Breast epithelium (tissue), 4 donors: ENCODE measurements at regions of chr12 and their contacts with region 1.

Region 1: GRCh38 chr12:22974865-22975264 is 349.9 kb downstream of the ETNK1 start:
- DNase-seq: no peak
- H3K4me3 ChIP-seq: no peak overlapping the region
- H3K27ac ChIP-seq: no peak overlapping the region
- H3K4me1 ChIP-seq: no peaks in the 10 kb centered on the region
- H3K27me3 ChIP-seq: no peaks in the 10 kb centered on the region
- CTCF ChIP-seq: no peak
- POLR2A ChIP-seq: no peak

Region 2: DNA sequence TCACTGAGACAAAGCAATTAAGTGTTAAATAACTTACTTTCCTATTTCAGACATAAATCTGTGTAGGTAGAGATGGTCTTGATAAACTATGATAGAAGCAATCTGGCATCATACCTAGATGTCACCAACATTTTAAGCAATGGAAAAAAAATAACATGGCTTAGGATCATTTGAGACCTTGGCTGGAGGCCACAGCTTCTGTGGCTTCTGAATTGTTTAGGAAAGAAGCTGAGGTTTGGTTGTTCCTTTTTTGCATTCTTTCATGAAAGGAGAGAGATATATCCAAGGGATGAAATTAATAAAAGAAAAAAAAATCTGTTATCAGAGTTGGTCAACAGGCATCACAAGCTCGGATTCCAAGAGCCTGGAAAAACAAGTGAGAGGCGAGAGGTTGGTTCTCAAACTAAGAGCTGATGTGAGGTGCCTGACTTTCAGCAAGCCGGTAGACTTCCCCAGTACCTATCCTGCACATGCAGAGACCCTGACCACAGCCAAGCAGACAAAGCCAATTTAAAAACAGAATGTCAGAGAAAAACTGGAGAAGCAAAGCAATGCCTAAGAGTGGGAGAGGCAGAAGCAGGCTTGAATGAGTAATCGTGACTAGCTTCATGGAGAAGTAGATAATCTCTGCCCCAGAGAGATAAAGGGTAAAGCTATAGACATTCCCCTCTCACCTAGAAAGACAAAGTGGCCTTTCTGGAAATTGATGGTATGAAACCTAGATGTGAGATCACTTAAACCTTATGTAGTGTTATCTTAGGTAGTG is 597.0 kb before region 1 on chr12:
- intact Hi-C with region 1: loop called (anchors 10 kb)
- DNase-seq: no peak
- H3K4me3 ChIP-seq: no peak overlapping the region
- H3K27ac ChIP-seq: no peak overlapping the region
- H3K4me1 ChIP-seq: no peaks in the 10 kb centered on the region
- H3K27me3 ChIP-seq: no peaks in the 10 kb centered on the region
- CTCF ChIP-seq: no peak
- POLR2A ChIP-seq: no peak

Region 3: DNA sequence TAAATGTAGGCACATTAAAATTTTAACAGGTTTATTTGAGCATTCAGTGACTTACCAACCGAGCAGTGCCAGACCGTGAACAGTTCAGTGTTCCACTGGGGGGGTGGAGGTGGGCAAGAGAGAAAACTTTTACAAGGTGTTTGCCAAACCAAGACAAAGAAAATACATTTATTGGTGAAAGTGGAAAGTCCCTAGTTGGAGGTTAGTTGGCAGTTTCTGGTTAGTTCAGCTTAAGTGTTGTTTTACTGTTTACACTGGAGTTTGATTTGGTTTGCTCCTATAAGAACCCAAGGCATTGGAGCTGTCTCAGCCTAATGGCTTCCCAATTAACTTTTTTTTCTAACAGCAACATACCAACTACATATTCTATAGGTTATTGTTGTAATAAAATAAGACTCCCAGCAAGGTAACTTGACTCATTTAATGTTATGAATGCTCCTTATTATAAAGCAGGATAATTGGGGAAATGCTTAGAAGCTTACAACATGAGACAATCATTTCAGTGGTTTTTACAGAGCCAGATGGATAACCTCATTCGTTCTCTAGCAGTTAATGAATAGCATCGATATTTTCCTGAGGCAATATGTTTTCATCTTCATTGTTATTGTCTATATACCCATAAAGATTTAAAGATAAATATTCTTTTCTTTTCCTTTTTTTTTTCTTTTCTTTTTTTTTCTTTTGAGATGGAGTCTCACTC is 234.1 kb before region 1 on chr12:
- intact Hi-C with region 1: loop called (anchors 5 kb)
- DNase-seq: no peak
- H3K4me3 ChIP-seq: no peak overlapping the region
- H3K27ac ChIP-seq: no peak overlapping the region
- H3K4me1 ChIP-seq: no peaks in the 10 kb centered on the region
- H3K27me3 ChIP-seq: no peaks in the 10 kb centered on the region
- CTCF ChIP-seq: no peak
- POLR2A ChIP-seq: no peak